Thyroid gland (tissue), 4 donors: ENCODE measurements at regions of chr10 and their contacts with region 1.

Region 1: GRCh38 chr10:97676770-97677581 is 10.1 kb downstream of the AVPI1 start:
- DNase-seq: peak; percentile 29 to 47
- H3K4me3 ChIP-seq: no peak overlapping the region
- H3K27ac ChIP-seq: no peak overlapping the region
- H3K4me1 ChIP-seq: no peaks in the 10 kb centered on the region
- H3K27me3 ChIP-seq: no peaks in the 10 kb centered on the region
- CTCF ChIP-seq: peak; percentile 75 to 93 (median 82)
- POLR2A ChIP-seq: no peak

Region 2: GRCh38 chr10:97736902-97737769 is 60.2 kb after region 1 on chr10 and contains the start of gene ZFYVE27:
- intact Hi-C with region 1: loop called (anchors 10 kb)
- DNase-seq: peak; percentile 97
- H3K4me3 ChIP-seq: peak within 1 kb of the TSS; percentile 80 to 92 (median 85)
- H3K27ac ChIP-seq: peak within 1 kb of the TSS; percentile 73 to 87 (median 86)
- H3K4me1 ChIP-seq: peaks cover 12 to 14% of the 10 kb centered on the region in 2 donors
- H3K27me3 ChIP-seq: no peaks in the 10 kb centered on the region
- CTCF ChIP-seq: peak in 1 of 6 experiments; percentile 4
- POLR2A ChIP-seq: peak; percentile 83 to 94
- total RNA-seq, gene ZFYVE27: 18.4 to 43.5 (median 24.8) TPM